Psoas muscle (tissue), 8 donors: ENCODE measurements at regions of chr4 and their contacts with region 1.

Region 1: DNA sequence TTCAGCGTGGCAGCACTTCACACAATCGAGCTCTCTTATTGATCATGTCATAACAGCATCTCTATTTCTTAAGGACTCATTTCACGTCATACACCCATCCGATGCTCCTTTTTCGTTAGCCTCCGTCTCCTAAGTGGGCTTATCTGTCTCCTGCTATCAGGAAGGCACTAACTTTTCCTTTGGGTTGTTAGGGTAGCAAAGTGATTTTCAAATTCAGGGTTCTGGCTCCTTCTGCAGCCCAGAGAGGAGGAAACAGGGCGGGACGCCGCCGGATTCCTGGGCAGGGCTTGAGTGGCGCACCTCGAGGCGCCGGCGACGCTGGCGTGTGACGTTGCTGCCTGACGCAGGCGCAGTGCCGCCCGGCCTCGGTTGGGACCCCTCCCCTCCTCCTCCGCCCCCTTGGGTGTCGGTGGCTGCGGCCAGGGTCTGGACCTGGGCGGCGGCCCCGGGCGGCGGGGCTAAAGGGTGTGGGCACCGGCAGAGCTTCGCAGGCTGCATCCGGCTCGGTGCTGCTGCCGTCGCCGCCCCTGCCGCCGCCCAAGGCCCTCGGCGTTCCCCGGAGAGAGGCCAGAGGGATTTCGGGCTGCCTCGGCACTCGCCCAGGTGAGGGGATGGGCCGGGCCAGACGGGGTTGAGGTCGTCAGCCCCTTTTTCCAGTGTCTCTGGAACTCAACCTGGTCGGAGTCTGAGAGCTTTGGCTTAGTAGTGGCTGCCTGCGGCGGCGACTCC is at the start of gene BLTP1:
- DNase-seq: peak; percentile 90 to 94
- ATAC-seq: peak; percentile 99 to 100 (median 100)
- H3K4me3 ChIP-seq: peak within 1 kb of the TSS; percentile 79
- H3K27ac ChIP-seq: peak within 1 kb of the TSS; percentile 83
- H3K4me1 ChIP-seq: peaks cover 12% of the 10 kb centered on the region
- H3K27me3 ChIP-seq: no peaks in the 10 kb centered on the region
- CTCF ChIP-seq: no peak
- total RNA-seq, gene BLTP1: 22.2 to 47.9 (median 36.3) TPM

Region 2: DNA sequence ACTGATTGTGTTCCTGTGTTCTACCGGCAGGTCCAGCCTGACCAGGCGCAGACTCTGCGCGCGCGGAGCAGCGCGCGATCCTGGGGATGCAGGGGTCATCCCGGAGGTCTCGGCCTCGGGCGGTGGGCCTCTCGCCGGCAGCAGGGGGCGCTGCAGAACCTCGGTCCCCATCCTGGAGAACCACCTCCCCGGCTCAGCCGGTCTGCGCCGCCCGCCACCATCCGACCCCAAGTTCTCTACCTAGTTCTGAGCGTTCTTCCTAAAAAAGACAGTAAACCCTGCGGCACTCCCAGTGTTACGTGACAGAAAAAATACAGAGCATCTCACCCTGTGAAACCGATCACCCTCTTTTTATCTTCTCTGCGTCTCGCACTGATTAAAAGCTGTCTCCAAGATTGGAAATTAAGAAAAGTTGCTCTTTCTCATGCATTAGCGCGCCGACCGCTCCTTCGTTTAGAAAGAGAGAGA is 201.9 kb before region 1 on chr4:
- intact Hi-C with region 1: loop called in 1 of 2 experiments (anchors 5 kb)
- DNase-seq: peak; percentile 74 to 88
- ATAC-seq: peak; percentile 69 to 92 (median 84)
- H3K4me3 ChIP-seq: peak overlapping the region; percentile 71
- H3K27ac ChIP-seq: no peak overlapping the region
- H3K4me1 ChIP-seq: no peaks in the 10 kb centered on the region
- H3K27me3 ChIP-seq: peaks cover 0 to 47% (median 17%) of the 10 kb centered on the region in 3 donors
- CTCF ChIP-seq: peak; percentile 71

Region 3: DNA sequence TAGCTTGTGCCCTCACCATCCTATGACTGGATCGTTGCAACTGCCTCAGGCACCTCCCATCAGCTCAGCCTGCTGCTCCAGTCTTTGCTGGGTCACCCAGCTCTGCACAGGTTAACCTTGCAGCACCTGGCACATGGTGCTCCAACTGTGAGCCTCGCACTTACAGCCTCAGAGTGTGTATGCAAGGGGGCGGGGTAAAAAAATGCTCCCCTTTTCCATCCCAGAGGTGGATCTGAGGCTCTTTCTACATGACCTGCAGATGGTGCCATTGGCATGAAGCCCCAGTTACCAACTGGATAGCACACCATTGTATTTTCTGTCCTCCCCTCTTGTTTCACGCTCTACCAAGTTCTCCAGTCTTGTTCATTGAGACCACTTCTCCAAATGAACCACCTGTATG is 154.1 kb before region 1 on chr4:
- intact Hi-C with region 1: loop called in 1 of 2 experiments (anchors 5 kb)
- DNase-seq: no peak
- ATAC-seq: peak in 2 of 4 donors; percentile 19 to 41
- H3K4me3 ChIP-seq: no peak overlapping the region
- H3K27ac ChIP-seq: no peak overlapping the region
- H3K4me1 ChIP-seq: no peaks in the 10 kb centered on the region
- H3K27me3 ChIP-seq: no peaks in the 10 kb centered on the region
- CTCF ChIP-seq: peak; percentile 7

Region 4: DNA sequence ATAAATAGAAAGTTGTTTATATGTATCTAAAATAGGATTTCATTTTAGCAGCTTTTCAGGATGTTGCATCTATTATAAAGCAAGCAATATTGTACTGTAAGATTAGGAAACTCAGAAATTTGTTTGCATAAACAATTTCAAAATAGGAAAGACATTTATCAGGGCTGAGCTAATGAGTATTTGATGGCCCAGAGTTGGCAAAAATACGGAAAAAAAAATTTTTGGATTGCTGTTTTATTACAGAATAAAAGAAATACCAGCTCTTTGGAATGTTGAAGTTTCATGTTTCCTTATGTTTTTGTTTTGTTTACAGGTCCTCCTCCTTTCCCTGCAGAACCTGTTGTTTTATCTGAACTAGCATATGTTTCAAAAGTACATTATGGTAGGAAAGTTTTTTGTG is 241.1 kb after region 1 on chr4:
- intact Hi-C with region 1: no loop called
- DNase-seq: no peak
- ATAC-seq: no peak
- H3K4me3 ChIP-seq: no peak overlapping the region
- H3K27ac ChIP-seq: no peak overlapping the region
- H3K4me1 ChIP-seq: no peaks in the 10 kb centered on the region
- H3K27me3 ChIP-seq: peaks cover 0 to 1% (median 0%) of the 10 kb centered on the region in 3 donors
- CTCF ChIP-seq: no peak